Activated CD4-positive, alpha-beta T cell treated with anti-CD3 and anti-CD28 coated beads, Interleukin-2, amount 10 ng/mL, durations not matched to agents 7 days and 5 days (primary cell): ENCODE measurements at regions of chr17 and their contacts with region 1.

Region 1: GRCh38 chr17:43888548-43888947 is 18.8 kb downstream of the MPP2 start:
- DNase-seq: no peak
- H3K4me3 Mint-ChIP-seq: no peak overlapping the region
- H3K27ac Mint-ChIP-seq: no peak overlapping the region
- H3K4me1 Mint-ChIP-seq: no peaks in the 10 kb centered on the region
- H3K27me3 Mint-ChIP-seq: peaks cover 16% of the 10 kb centered on the region

Region 2: DNA sequence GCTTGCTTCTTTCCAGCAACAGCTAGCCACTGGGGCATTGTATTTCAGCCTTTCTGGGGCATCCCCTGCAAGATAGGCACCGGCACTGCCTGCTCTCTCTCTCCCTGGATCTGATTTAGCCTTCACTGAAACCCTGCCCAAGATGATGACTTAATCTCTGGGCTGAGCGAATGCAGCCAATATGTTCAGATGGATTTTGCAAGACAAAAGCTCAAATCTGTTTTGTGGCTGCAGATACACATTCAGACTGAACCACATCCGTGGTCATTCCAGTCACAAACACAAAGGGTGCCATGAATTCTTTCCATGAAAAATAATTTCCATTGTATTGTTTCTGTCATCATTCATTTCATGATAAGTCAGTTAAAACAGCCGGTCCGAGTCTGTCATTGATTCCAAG is 154.2 kb before region 1 on chr17:
- CTCF ChIA-PET with region 1: no interaction called
- POLR2A ChIA-PET with region 1: no interaction called
- DNase-seq: no peak
- H3K4me3 Mint-ChIP-seq: no peak overlapping the region
- H3K27ac Mint-ChIP-seq: no peak overlapping the region
- H3K4me1 Mint-ChIP-seq: no peaks in the 10 kb centered on the region
- H3K27me3 Mint-ChIP-seq: peaks cover 22% of the 10 kb centered on the region

Region 3: DNA sequence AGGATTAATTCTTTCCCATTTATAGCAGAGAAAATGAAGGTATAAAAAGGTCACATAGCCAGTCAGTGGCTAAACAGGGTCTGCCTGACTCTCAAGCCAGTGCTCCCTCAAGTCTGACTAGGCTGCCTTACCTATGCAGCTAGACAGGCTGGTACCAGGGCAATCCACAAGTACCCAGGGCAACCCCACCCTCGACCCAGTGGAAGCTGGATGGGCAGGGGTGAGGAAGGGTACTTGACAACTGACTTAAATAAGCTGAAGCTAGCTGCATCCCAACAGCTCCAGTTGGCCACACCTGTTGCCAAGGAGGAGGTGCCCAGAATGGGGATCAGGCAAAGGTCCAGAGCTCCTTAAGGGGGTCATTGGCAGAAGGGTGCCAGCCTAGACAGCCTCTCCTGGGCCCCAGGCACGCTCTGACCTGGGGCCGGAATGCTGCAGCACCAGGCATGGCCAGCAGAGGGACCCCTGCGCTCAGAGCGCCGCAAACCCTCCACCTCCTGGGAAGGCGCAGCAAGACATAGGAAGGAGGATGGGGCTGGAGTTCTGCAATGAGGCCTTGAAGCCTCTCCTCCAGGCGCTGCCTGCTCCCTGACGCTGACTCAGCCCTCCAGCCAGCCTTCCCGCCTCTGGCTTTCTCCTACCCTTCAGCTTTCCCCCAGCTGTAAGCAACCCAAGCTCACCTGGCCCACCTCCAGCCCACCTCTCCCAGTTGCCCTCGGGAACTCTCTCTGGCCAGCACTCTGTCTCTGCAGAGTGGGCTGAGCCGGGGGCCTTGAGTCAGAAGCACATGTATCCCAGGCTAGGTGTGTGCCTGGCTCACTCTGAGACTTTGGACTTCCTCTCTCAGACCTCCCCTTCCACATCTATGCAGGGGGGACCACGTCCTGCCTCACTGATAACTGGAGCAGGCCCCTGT is 10.0 kb before region 1 on chr17:
- CTCF ChIA-PET with region 1: interaction called, 10 read pairs
- POLR2A ChIA-PET with region 1: interaction called, 3 read pairs
- DNase-seq: peak; percentile 51
- H3K4me3 Mint-ChIP-seq: no peak overlapping the region
- H3K27ac Mint-ChIP-seq: no peak overlapping the region
- H3K4me1 Mint-ChIP-seq: no peaks in the 10 kb centered on the region
- H3K27me3 Mint-ChIP-seq: peaks cover 5% of the 10 kb centered on the region